ENCODE measurements at regions of chr17 and their contacts with region 1.

Region 1: DNA sequence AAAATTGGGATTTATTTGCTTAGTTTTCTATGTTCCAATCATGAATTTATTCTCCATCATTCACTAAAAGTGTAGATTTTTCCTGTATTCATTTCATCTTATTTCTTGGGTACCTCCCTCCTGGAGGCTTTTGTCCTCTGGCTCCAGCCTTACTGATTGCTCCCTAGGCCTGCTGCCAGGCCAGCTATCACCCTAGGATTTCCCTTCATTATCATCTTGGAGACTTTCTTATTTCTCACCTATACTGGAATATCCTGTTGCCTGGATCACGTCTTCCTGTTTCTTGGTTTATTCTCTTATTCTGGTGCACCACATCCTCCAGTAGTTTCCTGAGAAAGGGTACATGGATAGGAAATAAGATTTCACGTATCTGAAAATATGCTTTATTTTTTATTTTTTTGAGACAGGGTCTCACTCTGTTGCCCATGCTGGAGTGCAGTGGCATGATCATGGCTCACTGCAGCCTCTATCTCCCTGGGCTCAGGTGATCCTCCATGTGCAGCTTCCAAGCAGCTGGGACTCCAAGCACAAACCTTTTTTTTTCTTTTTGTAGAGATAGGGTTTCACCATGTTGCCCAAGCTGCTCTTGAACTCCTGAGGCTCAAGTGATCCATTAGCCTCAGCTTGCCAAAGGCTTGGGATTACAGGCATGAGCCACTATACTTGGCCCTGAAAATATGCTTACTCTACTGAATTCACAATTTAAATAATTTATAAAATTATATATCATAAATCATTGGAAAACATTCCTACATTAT is 13.3 kb upstream of the KPNB1 start:
- DNase-seq: no peak
- ATAC-seq: no peak
- H3K4me3 ChIP-seq: no peak overlapping the region
- H3K27ac ChIP-seq: no peak overlapping the region
- H3K4me1 ChIP-seq: no peaks in the 10 kb centered on the region
- H3K27me3 ChIP-seq: no peaks in the 10 kb centered on the region
- CTCF ChIP-seq: no peak

Region 2: GRCh38 chr17:47650525-47651522 is 14.4 kb after region 1 on chr17:
- CTCF ChIA-PET with region 1: no interaction called
- POLR2A ChIA-PET with region 1: interaction called, 10 read pairs
- in situ Hi-C with region 1: no loop called
- intact Hi-C with region 1: no loop called
- DNase-seq: peak; percentile 54
- ATAC-seq: peak; percentile 76
- H3K4me3 ChIP-seq: peak overlapping the region; percentile 88 to 96
- H3K27ac ChIP-seq: peak overlapping the region; percentile 99
- H3K4me1 ChIP-seq: peaks cover 45% of the 10 kb centered on the region
- H3K27me3 ChIP-seq: no peaks in the 10 kb centered on the region
- CTCF ChIP-seq: no peak

Measured in Panc1 (cell line).